A549 (cell line): ENCODE measurements at regions of chr7 and their contacts with region 1.

Region 1: GRCh38 chr7:129825496-129826267 is 127.1 kb downstream of the UBE2H start:
- DNase-seq: peak; percentile 64 to 91
- ATAC-seq: peak; percentile 73 to 83
- H3K4me3 ChIP-seq: peak overlapping the region; percentile 67
- H3K27ac ChIP-seq: peak overlapping the region; percentile 96 to 98
- H3K4me1 ChIP-seq: peaks cover 34% of the 10 kb centered on the region
- CTCF ChIP-seq: peak; percentile 96
- EP300 ChIP-seq: peak in 1 of 2 experiments; percentile 14; a peak in 1 of 5 replicates
- POLR2A ChIP-seq: peak; percentile 54
- RAD21 ChIP-seq: peak; percentile 71 to 97

Region 2: GRCh38 chr7:129405527-129405926 is 420.2 kb before region 1 on chr7:
- CTCF ChIA-PET with region 1: no interaction called
- POLR2A ChIA-PET with region 1: no interaction called
- DNase-seq: no peak
- ATAC-seq: no peak
- H3K4me3 ChIP-seq: no peak overlapping the region
- H3K27ac ChIP-seq: no peak overlapping the region
- H3K4me1 ChIP-seq: peaks cover 20% of the 10 kb centered on the region
- CTCF ChIP-seq: no peak
- EP300 ChIP-seq: no peak
- POLR2A ChIP-seq: no peak
- RAD21 ChIP-seq: no peak

Region 3: DNA sequence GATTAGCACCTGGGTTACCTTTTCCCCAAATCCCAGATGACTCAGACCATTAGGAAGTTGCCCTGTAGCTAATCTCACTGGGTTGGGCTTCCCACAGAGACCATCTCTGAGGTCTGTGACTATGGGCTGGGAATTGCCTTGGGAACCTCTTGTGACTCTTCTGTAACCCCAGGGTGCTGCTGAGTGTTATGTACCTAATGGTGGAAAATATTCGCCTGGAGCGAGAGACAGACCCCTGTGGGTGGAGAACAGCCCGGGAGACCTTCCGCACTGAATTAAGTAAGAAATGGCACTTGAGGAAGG is 371.5 kb before region 1 on chr7:
- CTCF ChIA-PET with region 1: no interaction called
- POLR2A ChIA-PET with region 1: no interaction called
- DNase-seq: no peak
- ATAC-seq: no peak
- H3K4me3 ChIP-seq: no peak overlapping the region
- H3K27ac ChIP-seq: no peak overlapping the region
- H3K4me1 ChIP-seq: no peaks in the 10 kb centered on the region
- CTCF ChIP-seq: no peak
- EP300 ChIP-seq: no peak
- POLR2A ChIP-seq: no peak
- RAD21 ChIP-seq: no peak

Region 4: DNA sequence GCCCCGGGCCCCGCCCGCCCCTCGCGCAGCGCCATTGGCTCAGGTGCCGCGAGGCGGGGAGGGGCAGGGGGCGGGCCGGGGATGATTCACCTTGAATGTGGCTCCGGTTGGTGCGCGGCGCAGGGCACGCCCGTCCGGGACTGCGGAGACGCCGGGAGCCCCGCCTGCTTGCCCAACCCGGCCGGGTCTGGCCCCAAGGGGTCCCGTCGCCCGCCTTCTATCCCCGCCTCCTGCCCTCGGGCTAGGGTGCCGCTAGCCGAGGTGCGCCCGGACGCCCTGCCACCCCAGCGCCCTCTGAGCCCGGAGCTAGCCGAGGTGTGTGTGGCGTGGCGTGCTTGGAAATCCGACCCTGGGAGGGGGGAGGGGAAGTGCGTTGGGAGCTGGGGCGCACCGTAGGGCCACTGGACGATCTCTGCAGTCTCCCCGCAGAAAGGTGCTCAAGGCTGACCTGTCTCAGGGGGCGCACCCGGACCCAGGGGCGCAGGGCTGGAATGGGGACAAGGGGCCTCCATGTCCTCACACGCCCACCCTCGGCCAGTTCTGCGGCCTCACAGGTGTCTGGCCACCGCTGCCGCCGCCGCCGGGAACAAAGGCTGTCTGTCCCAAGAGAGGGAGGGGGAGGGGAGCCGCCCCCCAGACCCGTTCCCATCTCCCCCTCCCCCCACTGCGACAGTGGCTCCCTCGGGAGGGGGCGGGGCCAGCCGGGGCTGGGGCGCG is 45.3 kb before region 1 on chr7:
- CTCF ChIA-PET with region 1: interaction called, 11 read pairs
- POLR2A ChIA-PET with region 1: interaction called, 10 read pairs
- DNase-seq: peak; percentile 90 to 98
- ATAC-seq: peak; percentile 83 to 92
- H3K4me3 ChIP-seq: peak overlapping the region; percentile 69
- H3K27ac ChIP-seq: peak overlapping the region; percentile 78 to 89
- H3K4me1 ChIP-seq: peaks cover 12% of the 10 kb centered on the region
- CTCF ChIP-seq: no peak
- EP300 ChIP-seq: no peak
- POLR2A ChIP-seq: no peak
- RAD21 ChIP-seq: no peak

Region 5: GRCh38 chr7:129804890-129805719 is 20.6 kb before region 1 on chr7:
- CTCF ChIA-PET with region 1: interaction called, 20 read pairs
- POLR2A ChIA-PET with region 1: interaction called, 3 read pairs
- DNase-seq: no peak
- ATAC-seq: peak in 1 of 2 experiments; percentile 11; a peak in 2 of 6 replicates
- H3K4me3 ChIP-seq: no peak overlapping the region
- H3K27ac ChIP-seq: no peak overlapping the region
- H3K4me1 ChIP-seq: no peaks in the 10 kb centered on the region
- CTCF ChIP-seq: no peak
- EP300 ChIP-seq: no peak
- POLR2A ChIP-seq: no peak
- RAD21 ChIP-seq: no peak

Region 6: GRCh38 chr7:129853661-129854300 is 28.1 kb after region 1 on chr7:
- CTCF ChIA-PET with region 1: interaction called, 13 read pairs
- POLR2A ChIA-PET with region 1: no interaction called
- DNase-seq: peak in 1 of 2 experiments; percentile 27
- ATAC-seq: peak in 1 of 2 experiments; percentile 66; a peak in 3 of 6 replicates
- H3K4me3 ChIP-seq: peak overlapping the region; percentile 4; the same call in 1 of the 3 replicates
- H3K27ac ChIP-seq: peak overlapping the region; percentile 48 to 63
- H3K4me1 ChIP-seq: peaks cover 51% of the 10 kb centered on the region
- CTCF ChIP-seq: no peak
- EP300 ChIP-seq: no peak
- POLR2A ChIP-seq: no peak
- RAD21 ChIP-seq: no peak; a peak in 1 of 5 replicates

Region 7: GRCh38 chr7:129948877-129949291 is 123.2 kb after region 1 on chr7:
- CTCF ChIA-PET with region 1: interaction called, 15 read pairs
- POLR2A ChIA-PET with region 1: interaction called, 8 read pairs
- DNase-seq: peak; percentile 92 to 94
- ATAC-seq: peak; percentile 74 to 88
- H3K4me3 ChIP-seq: peak overlapping the region; percentile 73
- H3K27ac ChIP-seq: peak overlapping the region; percentile 83 to 95
- H3K4me1 ChIP-seq: peaks cover 32% of the 10 kb centered on the region
- CTCF ChIP-seq: no peak
- EP300 ChIP-seq: no peak
- POLR2A ChIP-seq: no peak
- RAD21 ChIP-seq: no peak; a peak in 2 of 5 replicates

Region 8: GRCh38 chr7:130010689-130011412 is 185.2 kb after region 1 on chr7:
- CTCF ChIA-PET with region 1: interaction called, 212 read pairs
- POLR2A ChIA-PET with region 1: interaction called, 10 read pairs
- DNase-seq: peak; percentile 76 to 90
- ATAC-seq: peak; percentile 60 to 66
- H3K4me3 ChIP-seq: no peak overlapping the region
- H3K27ac ChIP-seq: peak overlapping the region; percentile 78 to 92
- H3K4me1 ChIP-seq: peaks cover 27% of the 10 kb centered on the region
- CTCF ChIP-seq: peak; percentile 95
- EP300 ChIP-seq: no peak
- POLR2A ChIP-seq: no peak
- RAD21 ChIP-seq: peak; percentile 91 to 98

Region 9: GRCh38 chr7:130069978-130070860 is 244.5 kb after region 1 on chr7 and contains the start of gene KLHDC10:
- CTCF ChIA-PET with region 1: no interaction called
- POLR2A ChIA-PET with region 1: no interaction called
- DNase-seq: peak; percentile 99
- ATAC-seq: peak; percentile 98 to 99
- H3K4me3 ChIP-seq: peak within 1 kb of the TSS; percentile 80
- H3K27ac ChIP-seq: peak within 1 kb of the TSS; percentile 81 to 91
- H3K4me1 ChIP-seq: peaks cover 18% of the 10 kb centered on the region
- CTCF ChIP-seq: no peak
- EP300 ChIP-seq: no peak
- POLR2A ChIP-seq: peak; percentile 50; the same call in 1 of the 2 replicates
- RAD21 ChIP-seq: no peak
- polyA plus RNA-seq, gene KLHDC10: 29.6 and 35.0 TPM in 2 replicates

Region 10: DNA sequence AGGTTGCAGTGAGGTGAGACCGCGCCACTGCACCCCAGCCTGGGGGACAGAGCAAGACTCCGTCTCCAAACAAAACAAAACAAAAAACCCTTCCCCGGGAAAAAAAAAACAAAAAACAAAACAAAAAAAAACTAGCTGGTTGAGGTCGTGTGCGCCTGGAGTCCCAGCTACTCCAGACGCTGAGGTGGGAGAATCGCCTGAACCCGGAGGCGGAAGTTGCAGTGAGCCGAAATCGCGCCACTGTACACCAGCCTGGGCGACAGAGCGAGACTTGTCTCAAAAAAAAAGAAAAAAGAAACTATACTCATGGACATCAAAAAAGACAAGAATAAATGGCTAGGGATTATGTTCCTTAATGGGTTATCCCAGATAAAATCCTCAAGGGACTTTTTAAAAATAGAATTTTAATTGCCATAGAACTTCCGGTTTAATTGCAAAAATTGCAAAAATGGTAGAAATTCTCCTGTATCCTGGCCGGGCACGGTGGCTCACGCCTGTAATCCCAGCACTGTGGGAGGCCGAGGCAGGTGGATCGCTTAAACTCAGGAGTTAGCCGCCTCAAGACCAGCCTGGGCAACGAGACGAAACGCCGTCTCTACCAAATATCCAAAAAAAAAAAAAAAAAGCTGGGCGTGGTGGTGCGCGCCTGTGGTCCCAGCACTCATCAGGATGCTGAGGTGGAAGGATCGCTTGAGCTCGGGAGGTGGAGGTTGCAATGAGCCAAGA is 282.4 kb after region 1 on chr7:
- CTCF ChIA-PET with region 1: no interaction called
- POLR2A ChIA-PET with region 1: no interaction called
- DNase-seq: no peak
- ATAC-seq: no peak
- H3K4me3 ChIP-seq: no peak overlapping the region
- H3K27ac ChIP-seq: no peak overlapping the region
- H3K4me1 ChIP-seq: no peaks in the 10 kb centered on the region
- CTCF ChIP-seq: no peak
- EP300 ChIP-seq: no peak
- POLR2A ChIP-seq: no peak
- RAD21 ChIP-seq: no peak